ENCODE measurements at regions of chr9 and their contacts with region 1.

Region 1: GRCh38 chr9:98034593-98035546 is 21.7 kb upstream of the NANS start:
- DNase-seq: peak; percentile 91
- H3K4me3 Mint-ChIP-seq: no peak overlapping the region
- H3K27ac Mint-ChIP-seq: no peak overlapping the region
- H3K4me1 Mint-ChIP-seq: peaks cover 13% of the 10 kb centered on the region
- H3K27me3 Mint-ChIP-seq: peaks cover 5% of the 10 kb centered on the region

Region 2: DNA sequence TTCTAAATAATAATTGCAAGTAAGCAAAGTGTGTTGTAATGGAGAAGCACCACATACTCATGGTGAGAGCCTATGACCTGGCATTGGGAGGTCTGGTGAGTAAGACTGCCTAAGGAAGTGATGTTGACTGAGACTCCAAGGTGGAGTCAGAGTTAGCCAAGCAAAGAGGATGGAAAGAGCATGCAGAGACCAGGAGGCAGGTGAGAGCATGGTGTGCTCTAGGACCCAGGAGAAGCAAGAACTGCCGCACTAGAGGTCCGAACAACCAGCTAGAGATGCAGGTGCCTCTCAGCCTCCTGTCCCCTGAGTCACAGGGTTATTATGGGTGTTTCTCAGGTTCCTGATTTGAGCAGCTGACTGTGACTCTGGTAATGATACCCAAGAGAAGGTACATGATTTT is 24.4 kb before region 1 on chr9:
- CTCF ChIA-PET with region 1: interaction called, 10 read pairs
- POLR2A ChIA-PET with region 1: no interaction called
- DNase-seq: no peak
- H3K4me3 Mint-ChIP-seq: no peak overlapping the region
- H3K27ac Mint-ChIP-seq: no peak overlapping the region
- H3K4me1 Mint-ChIP-seq: peaks cover 33% of the 10 kb centered on the region
- H3K27me3 Mint-ChIP-seq: no peaks in the 10 kb centered on the region

Region 3: DNA sequence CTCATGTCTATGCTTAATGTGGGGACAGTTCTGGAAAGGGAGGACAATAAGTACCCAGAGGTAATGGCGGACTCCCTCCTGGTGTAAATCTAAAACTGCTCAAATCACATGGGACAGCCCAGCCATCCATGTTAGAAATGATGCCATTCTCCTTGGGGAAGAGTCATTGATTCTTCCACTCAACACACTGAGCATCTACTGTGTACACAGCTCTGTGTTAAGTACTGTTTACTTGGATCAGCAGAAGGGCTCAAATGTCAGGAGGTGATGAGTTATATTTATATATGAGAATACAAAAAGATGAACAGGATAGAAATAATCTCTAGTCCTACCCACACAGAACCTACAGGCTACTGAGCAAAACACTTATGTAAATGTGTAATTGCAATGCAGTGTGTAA is 10.2 kb before region 1 on chr9:
- CTCF ChIA-PET with region 1: interaction called, 15 read pairs
- POLR2A ChIA-PET with region 1: interaction called, 6 read pairs
- DNase-seq: no peak
- H3K4me3 Mint-ChIP-seq: no peak overlapping the region
- H3K27ac Mint-ChIP-seq: no peak overlapping the region
- H3K4me1 Mint-ChIP-seq: peaks cover 2% of the 10 kb centered on the region
- H3K27me3 Mint-ChIP-seq: no peaks in the 10 kb centered on the region

Region 4: GRCh38 chr9:98045234-98046179 is 10.6 kb after region 1 on chr9:
- CTCF ChIA-PET with region 1: interaction called, 25 read pairs
- POLR2A ChIA-PET with region 1: interaction called, 3 read pairs
- DNase-seq: peak; percentile 44
- H3K4me3 Mint-ChIP-seq: peak overlapping the region; percentile 79
- H3K27ac Mint-ChIP-seq: peak overlapping the region; percentile 82
- H3K4me1 Mint-ChIP-seq: peaks cover 49% of the 10 kb centered on the region
- H3K27me3 Mint-ChIP-seq: no peaks in the 10 kb centered on the region

Region 5: DNA sequence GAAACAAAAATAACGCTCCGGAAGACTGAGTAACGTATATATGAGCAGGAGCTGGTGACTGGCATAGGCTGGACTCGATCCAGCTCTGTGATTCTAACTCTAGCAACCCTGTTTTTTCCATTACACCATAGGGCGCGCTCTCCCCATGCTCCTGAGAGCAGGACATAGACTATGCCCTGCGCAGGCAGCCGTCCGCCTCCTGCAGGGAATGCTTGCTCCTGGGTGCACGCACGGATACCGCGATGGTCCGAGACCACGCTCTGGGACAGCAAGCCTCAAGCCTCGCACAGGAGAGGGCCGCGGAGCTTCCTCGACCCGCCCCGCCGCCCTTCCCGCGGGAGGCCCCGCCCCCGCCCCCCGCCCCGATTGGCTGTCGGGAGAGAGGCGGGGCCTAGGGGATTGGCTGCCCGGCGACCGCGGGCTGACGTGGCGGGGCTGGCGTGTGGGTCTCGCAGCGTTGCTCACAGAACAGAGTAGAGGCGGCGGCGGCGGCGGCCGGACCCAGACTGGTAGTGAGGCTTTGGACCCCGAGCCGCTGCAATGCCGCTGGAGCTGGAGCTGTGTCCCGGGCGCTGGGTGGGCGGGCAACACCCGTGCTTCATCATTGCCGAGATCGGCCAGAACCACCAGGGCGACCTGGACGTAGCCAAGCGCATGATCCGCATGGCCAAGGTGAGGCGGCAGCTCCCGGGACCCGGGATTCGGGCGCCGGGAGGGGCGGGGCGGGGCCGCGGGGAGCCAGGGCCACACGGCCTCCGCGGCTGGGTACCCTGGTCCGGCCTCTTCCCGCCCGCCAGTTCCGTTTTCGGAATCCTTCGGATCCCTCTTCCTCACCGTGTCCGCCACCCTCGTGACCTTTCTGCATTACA is 21.6 kb after region 1 on chr9 and contains the start of gene NANS:
- CTCF ChIA-PET with region 1: interaction called, 11 read pairs
- POLR2A ChIA-PET with region 1: interaction called, 6 read pairs
- DNase-seq: peak; percentile 94
- H3K4me3 Mint-ChIP-seq: peak within 1 kb of the TSS; percentile 97
- H3K27ac Mint-ChIP-seq: peak within 1 kb of the TSS; percentile 92
- H3K4me1 Mint-ChIP-seq: peaks cover 37% of the 10 kb centered on the region
- H3K27me3 Mint-ChIP-seq: no peaks in the 10 kb centered on the region
- total RNA-seq, gene NANS: 46.1 to 47.3 TPM

Region 6: DNA sequence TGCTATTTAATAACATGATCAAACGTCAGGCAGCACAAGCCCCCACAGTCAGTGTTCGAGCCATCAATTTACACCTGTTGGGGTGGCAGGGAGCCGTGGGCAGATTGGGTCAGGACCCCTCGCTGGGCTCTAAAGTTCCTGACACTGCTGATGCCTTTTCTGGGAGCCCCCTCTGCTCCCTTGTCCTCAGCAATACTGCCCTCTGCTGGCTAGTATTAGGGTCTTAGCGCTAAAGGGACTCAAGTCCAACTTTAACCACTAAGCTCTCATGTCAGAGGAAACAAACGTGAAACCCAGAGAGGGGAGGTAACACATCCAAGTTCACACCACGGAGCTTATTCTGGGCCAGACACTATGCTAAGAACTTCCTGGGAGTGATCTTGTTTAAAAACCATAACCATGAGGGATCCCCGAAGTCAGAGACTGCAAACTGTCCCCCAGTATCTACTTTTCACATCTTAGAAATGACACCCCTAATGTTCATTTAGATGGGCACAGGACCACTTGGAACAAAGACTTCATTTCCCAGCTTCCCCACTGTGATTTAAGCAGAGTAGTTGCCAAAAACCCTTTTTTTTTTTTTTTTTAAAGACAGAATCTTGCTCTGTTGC is 741.1 kb after region 1 on chr9:
- CTCF ChIA-PET with region 1: no interaction called
- POLR2A ChIA-PET with region 1: no interaction called
- DNase-seq: peak; percentile 41
- H3K4me3 Mint-ChIP-seq: no peak overlapping the region
- H3K27ac Mint-ChIP-seq: no peak overlapping the region
- H3K4me1 Mint-ChIP-seq: no peaks in the 10 kb centered on the region
- H3K27me3 Mint-ChIP-seq: no peaks in the 10 kb centered on the region